H1 (cell line): ENCODE measurements at regions of chr6 and their contacts with region 1.

Region 1: DNA sequence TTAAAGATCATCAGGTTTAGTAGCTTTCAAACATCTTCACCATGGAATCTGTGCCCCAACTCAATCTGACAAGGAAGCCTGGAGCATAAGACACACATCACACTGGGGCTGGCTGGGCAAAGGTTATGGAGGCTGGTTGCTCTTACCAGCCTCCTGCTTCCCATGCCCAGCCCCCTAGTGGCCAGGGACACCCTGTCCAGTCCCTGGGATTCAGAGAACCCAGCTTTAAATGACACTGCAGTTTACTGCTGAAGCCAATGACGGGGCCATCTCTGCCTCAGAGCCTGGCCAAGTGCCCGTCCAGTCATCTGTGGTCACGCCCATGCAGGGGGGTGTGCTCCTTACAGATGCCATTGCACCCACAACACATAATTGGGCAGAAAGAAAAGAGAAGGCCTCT is 272.9 kb downstream of the SMOC2 start:
- DNase-seq: no peak
- H3K4me3 ChIP-seq: no peak overlapping the region
- H3K27ac ChIP-seq: no peak overlapping the region
- H3K4me1 ChIP-seq: no peaks in the 10 kb centered on the region
- H3K27me3 ChIP-seq: no peaks in the 10 kb centered on the region
- CTCF ChIP-seq: peak; percentile 38 to 45 (median 39)
- EP300 ChIP-seq: no peak
- POLR2A ChIP-seq: no peak
- RAD21 ChIP-seq: peak in 1 of 2 experiments; percentile 52; a peak in 2 of 4 replicates

Region 2: GRCh38 chr6:168662301-168662936 is 51.4 kb before region 1 on chr6:
- CTCF ChIA-PET with region 1: interaction called, 12 read pairs
- POLR2A ChIA-PET with region 1: no interaction called
- DNase-seq: peak in 1 of 2 experiments; percentile 16
- H3K4me3 ChIP-seq: no peak overlapping the region
- H3K27ac ChIP-seq: no peak overlapping the region
- H3K4me1 ChIP-seq: peaks cover 0 to 7% (median 4%) of the 10 kb centered on the region in 4 experiments; a peak in 3 of 7 replicates
- H3K27me3 ChIP-seq: no peaks in the 10 kb centered on the region
- CTCF ChIP-seq: no peak
- EP300 ChIP-seq: no peak
- POLR2A ChIP-seq: no peak
- RAD21 ChIP-seq: no peak

Region 3: DNA sequence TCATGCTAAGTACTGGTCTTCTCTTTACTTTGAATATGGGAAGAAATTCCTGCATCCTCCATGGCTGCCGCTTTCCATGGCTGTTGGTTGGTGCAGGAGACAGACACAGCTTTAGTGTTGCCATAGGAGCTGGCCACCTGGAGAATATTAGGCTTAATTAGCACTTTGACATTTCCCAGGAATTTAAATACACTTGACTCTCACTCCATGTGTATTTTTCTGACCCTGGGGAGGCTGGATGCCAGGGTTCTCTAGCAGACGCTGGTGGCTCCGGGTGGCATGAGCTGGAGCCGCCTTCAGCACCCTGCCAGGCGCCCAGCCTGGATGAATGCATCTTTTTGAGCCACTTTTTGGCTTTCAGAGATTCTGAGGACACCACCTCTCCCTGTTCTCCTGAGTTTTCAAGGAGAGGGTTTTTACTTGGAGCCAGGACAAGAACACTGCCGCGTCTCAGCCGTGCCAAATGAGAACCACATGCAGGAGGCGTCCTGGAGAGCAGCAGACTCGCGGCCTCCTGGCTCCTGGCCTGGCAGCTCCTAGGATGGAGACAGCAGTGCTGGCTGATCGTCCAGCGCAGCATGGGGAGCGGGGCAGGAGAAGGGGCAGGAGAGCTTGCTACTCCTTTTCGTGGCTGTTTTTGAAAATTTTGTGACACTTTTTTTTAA is 14.1 kb before region 1 on chr6:
- CTCF ChIA-PET with region 1: interaction called, 29 read pairs
- POLR2A ChIA-PET with region 1: no interaction called
- DNase-seq: no peak
- H3K4me3 ChIP-seq: no peak overlapping the region
- H3K27ac ChIP-seq: no peak overlapping the region
- H3K4me1 ChIP-seq: peaks cover 0 to 8% (median 3%) of the 10 kb centered on the region in 4 experiments; a peak in 3 of 7 replicates
- H3K27me3 ChIP-seq: no peaks in the 10 kb centered on the region
- CTCF ChIP-seq: no peak
- EP300 ChIP-seq: no peak
- POLR2A ChIP-seq: no peak
- RAD21 ChIP-seq: no peak

Region 4: DNA sequence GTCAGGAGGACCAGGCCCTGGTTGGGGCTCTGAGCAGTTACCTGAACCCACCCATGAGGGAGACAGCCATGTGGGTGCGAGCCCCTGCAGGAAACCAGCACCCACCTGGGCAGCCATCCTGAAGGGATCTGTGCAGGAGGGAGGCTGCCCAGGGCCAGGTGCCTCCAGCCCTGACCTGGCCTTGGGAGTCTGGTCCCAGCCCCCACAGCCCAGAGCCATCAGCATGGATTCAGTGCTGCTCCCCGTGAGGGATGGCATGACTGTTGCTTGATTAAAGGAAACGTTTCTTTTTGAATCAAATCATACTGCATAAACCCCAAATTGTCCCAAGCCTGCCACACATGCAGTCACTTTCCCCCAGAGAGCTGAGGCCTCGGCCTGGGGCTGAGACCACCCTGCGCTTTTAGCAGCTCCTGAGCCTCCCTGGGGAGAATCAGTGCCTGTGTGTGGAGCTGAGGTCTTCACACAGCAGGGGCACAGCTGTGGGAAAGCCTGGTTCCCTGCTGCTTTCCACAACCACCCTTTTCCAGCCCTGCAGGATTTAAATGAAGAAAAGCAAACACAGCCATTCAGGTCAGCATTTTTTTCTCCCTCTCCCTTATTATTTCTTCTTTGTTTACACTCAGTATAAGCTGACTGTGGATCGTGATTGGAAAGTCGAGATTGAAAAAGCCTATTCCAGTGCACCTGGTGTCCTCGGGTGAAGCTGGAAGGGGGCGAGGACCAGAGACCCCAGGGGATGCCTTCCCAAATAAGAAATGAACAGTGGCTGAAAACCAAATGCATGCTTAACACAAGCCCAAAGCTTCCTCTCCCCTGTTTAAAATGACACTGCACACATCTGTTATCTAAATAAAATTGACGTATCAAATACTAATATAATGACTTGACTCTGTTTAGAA is 11.1 kb after region 1 on chr6:
- CTCF ChIA-PET with region 1: interaction called, 43 read pairs
- POLR2A ChIA-PET with region 1: no interaction called
- DNase-seq: no peak
- H3K4me3 ChIP-seq: no peak overlapping the region
- H3K27ac ChIP-seq: no peak overlapping the region
- H3K4me1 ChIP-seq: no peaks in the 10 kb centered on the region
- H3K27me3 ChIP-seq: no peaks in the 10 kb centered on the region
- CTCF ChIP-seq: no peak
- EP300 ChIP-seq: no peak
- POLR2A ChIP-seq: no peak
- RAD21 ChIP-seq: no peak